ENCODE measurements at regions of chr6 and their contacts with region 1.

Region 1: GRCh38 chr6:79078075-79079025 is at the start of gene PHIP:
- DNase-seq: peak; percentile 95
- H3K4me3 Mint-ChIP-seq: peak within 1 kb of the TSS; percentile 79
- H3K27ac Mint-ChIP-seq: peak within 1 kb of the TSS; percentile 98
- H3K4me1 Mint-ChIP-seq: peaks cover 5% of the 10 kb centered on the region
- H3K27me3 Mint-ChIP-seq: no peaks in the 10 kb centered on the region
- CTCF ChIP-seq: no peak
- total RNA-seq, gene PHIP: 25.3 and 26.5 TPM in 2 replicates

Region 2: GRCh38 chr6:78867370-78868040 is 210.8 kb before region 1 on chr6 and contains the start of gene IRAK1BP1:
- CTCF ChIA-PET with region 1: no interaction called
- POLR2A ChIA-PET with region 1: no interaction called
- intact Hi-C with region 1: loop called (anchors 5 kb)
- DNase-seq: peak; percentile 81
- H3K4me3 Mint-ChIP-seq: peak within 1 kb of the TSS; percentile 100
- H3K27ac Mint-ChIP-seq: peak within 1 kb of the TSS; percentile 94
- H3K4me1 Mint-ChIP-seq: no peaks in the 10 kb centered on the region
- H3K27me3 Mint-ChIP-seq: no peaks in the 10 kb centered on the region
- CTCF ChIP-seq: no peak
- total RNA-seq, gene IRAK1BP1: 4.6 and 6.6 TPM in 2 replicates

Region 3: DNA sequence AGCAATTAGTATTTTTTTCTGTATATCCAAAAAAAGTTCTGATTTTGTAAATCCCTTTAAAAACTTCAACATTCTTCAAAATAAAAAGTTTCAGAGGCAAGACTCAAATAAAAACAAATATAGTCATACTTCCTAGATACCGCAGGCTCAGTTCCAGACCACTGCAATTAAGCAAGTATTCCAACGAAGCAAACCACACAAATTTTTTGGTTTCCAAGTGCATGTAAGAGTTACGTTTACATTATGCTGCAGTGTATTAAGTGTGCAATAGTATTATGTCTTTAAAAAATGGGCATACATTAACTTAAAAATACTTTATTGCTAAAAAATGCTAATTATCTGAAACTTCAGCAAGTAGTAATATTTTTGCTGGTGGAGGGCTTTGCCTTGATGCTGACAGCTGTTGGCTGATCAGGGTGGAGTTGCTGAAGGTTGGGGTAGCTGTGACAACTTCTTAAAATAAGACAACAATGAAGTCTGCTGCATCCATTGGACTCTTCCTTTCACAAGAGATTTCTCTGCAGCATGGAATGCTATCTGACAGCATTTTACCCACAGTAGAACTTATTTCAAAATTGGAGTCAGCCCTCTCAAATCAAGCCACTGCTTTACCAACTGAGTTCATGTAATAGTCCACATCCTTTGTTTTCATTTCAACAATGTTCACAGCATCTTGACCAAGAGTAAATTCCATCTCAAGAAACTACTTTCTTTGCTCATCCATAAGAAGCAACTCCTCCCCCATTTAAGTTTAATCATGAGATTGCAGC is 46.3 kb before region 1 on chr6:
- CTCF ChIA-PET with region 1: no interaction called
- POLR2A ChIA-PET with region 1: no interaction called
- intact Hi-C with region 1: no loop called
- DNase-seq: peak; percentile 26
- H3K4me3 Mint-ChIP-seq: no peak overlapping the region
- H3K27ac Mint-ChIP-seq: no peak overlapping the region
- H3K4me1 Mint-ChIP-seq: peaks cover 10% of the 10 kb centered on the region
- H3K27me3 Mint-ChIP-seq: no peaks in the 10 kb centered on the region
- CTCF ChIP-seq: no peak

Region 4: GRCh38 chr6:79233611-79234149 is 155.3 kb after region 1 on chr6:
- CTCF ChIA-PET with region 1: no interaction called
- POLR2A ChIA-PET with region 1: interaction called, 81 read pairs
- intact Hi-C with region 1: loop called (anchors 1 kb)
- DNase-seq: peak; percentile 90
- H3K4me3 Mint-ChIP-seq: peak overlapping the region; percentile 88
- H3K27ac Mint-ChIP-seq: peak overlapping the region; percentile 81
- H3K4me1 Mint-ChIP-seq: peaks cover 13% of the 10 kb centered on the region
- H3K27me3 Mint-ChIP-seq: no peaks in the 10 kb centered on the region
- CTCF ChIP-seq: peak; percentile 19

Region 5: GRCh38 chr6:79421707-79422484 is 343.5 kb after region 1 on chr6:
- CTCF ChIA-PET with region 1: no interaction called
- POLR2A ChIA-PET with region 1: interaction called, 21 read pairs
- intact Hi-C with region 1: no loop called
- DNase-seq: peak; percentile 95
- H3K4me3 Mint-ChIP-seq: peak overlapping the region; percentile 28
- H3K27ac Mint-ChIP-seq: peak overlapping the region; percentile 85
- H3K4me1 Mint-ChIP-seq: peaks cover 29% of the 10 kb centered on the region
- H3K27me3 Mint-ChIP-seq: no peaks in the 10 kb centered on the region
- CTCF ChIP-seq: no peak

Region 6: DNA sequence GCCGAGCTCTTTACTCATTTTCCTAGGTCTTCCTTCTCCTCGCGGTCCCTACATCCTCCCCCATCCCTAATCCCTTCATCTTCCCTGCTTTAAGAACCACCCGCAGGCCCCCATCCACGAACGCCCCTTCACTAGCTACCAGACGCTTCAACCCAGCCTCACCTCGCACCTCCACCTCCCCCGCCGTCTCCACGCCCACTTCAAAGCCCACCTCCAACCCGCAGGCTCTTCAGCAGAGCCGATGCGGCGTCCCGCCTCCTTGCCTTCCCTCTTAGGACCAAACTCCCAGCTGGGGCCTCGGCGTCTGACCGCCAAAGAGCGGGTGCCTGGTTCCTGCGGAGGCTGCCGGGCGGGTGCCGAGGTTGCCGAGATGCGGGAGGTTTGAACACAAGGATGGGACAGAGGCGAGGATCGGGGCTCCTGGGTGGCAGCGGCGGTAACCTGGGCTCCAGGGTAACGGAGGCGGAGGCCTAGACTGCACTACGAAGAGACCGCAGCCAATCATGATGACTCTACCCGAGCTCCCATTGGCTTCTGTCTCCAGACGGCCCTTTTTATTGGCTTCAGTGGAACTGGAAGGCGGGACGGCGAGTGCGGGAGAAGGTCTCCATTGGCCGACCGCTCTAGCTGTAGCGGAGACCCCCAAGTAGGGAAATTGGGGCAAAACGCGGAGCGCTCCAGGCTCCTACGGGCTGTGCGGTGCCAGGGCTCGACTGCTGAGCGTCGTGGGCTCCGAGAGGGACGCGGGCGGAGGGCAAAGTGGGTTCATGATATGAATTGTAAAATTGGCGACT is 458.8 kb after region 1 on chr6 and contains the start of gene LCA5:
- CTCF ChIA-PET with region 1: interaction called, 5 read pairs
- POLR2A ChIA-PET with region 1: interaction called, 111 read pairs
- intact Hi-C with region 1: loop called (anchors 1 kb)
- DNase-seq: peak; percentile 99
- H3K4me3 Mint-ChIP-seq: no peak within 1 kb of the TSS
- H3K27ac Mint-ChIP-seq: no peak within 1 kb of the TSS
- H3K4me1 Mint-ChIP-seq: peaks cover 8% of the 10 kb centered on the region
- H3K27me3 Mint-ChIP-seq: no peaks in the 10 kb centered on the region
- CTCF ChIP-seq: no peak
- total RNA-seq, gene LCA5: 4.5 TPM in 2 replicates

Region 7: GRCh38 chr6:79665725-79666551 is 587.6 kb after region 1 on chr6:
- CTCF ChIA-PET with region 1: no interaction called
- POLR2A ChIA-PET with region 1: no interaction called
- intact Hi-C with region 1: no loop called
- DNase-seq: no peak
- H3K4me3 Mint-ChIP-seq: no peak overlapping the region
- H3K27ac Mint-ChIP-seq: no peak overlapping the region
- H3K4me1 Mint-ChIP-seq: no peaks in the 10 kb centered on the region
- H3K27me3 Mint-ChIP-seq: no peaks in the 10 kb centered on the region
- CTCF ChIP-seq: no peak

Region 8: DNA sequence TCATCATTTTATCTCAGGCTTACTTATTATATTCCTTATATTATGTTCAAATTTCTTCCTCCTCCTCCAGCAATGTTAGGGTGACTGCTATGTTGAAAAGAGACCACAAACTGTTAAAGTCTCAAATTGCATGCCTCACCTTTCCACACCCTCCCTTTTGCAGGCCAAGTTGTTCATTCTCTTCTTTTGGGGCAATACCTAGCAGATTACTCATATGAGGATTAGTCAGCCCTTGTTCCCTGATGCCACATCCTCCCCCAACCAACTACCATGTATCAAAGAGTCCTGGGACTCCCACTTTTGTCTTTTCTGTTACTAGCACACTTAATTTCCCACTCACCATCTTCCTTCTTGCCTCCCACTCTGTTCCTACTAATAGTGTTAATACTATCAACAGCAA is 1462.8 kb after region 1 on chr6:
- CTCF ChIA-PET with region 1: no interaction called
- POLR2A ChIA-PET with region 1: no interaction called
- intact Hi-C with region 1: loop called (anchors 10 kb)
- DNase-seq: peak; percentile 94
- H3K4me3 Mint-ChIP-seq: peak overlapping the region; percentile 32
- H3K27ac Mint-ChIP-seq: peak overlapping the region; percentile 68
- H3K4me1 Mint-ChIP-seq: peaks cover 86% of the 10 kb centered on the region
- H3K27me3 Mint-ChIP-seq: no peaks in the 10 kb centered on the region
- CTCF ChIP-seq: no peak

Measured in MCF 10A (cell line).